ENCODE measurements at regions of chr15 and their contacts with region 1.

Region 1: DNA sequence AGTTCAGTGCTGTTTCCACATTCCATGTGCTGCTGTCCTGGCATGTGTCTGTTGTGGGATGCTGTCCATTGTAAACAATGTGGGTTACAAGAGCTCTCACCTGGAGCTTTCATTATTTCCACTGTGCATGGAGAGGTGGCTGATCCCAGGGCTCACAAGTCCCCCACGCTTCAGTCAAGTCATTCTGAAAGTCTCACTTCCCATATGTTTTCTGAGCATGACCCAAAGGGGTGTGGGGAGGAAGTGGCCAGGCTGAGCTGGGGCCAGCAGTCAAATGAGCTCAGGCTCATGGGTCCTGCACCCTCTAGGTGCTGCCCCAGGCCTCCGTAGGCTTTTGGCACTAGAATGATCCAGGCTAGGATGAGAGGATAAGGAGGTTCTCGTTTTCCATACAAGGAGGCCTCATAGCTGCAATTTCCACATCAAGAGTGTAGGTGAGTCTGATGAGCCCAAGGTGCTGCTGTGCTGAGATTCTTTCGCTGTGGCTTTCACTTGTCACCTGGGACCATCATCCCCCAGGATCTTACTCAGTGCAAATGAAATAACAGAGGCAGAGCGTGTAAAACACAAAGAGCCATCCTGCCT is 22.0 kb downstream of the STARD5 start:
- DNase-seq: peak in 1 of 9 experiments; percentile 51
- ATAC-seq: no peak
- H3K4me3 ChIP-seq: peak overlapping the region; percentile 61 to 89
- H3K4me3 Mint-ChIP-seq: peak overlapping the region; percentile 92
- H3K27ac ChIP-seq: peak overlapping the region; percentile 28 to 92
- H3K27ac Mint-ChIP-seq: peak overlapping the region; percentile 98
- H3K4me1 ChIP-seq: peaks cover 58% of the 10 kb centered on the region
- H3K4me1 Mint-ChIP-seq: peaks cover 72% of the 10 kb centered on the region
- H3K27me3 ChIP-seq: no peaks in the 10 kb centered on the region
- H3K27me3 Mint-ChIP-seq: no peaks in the 10 kb centered on the region
- CTCF ChIP-seq: no peak

Region 2: DNA sequence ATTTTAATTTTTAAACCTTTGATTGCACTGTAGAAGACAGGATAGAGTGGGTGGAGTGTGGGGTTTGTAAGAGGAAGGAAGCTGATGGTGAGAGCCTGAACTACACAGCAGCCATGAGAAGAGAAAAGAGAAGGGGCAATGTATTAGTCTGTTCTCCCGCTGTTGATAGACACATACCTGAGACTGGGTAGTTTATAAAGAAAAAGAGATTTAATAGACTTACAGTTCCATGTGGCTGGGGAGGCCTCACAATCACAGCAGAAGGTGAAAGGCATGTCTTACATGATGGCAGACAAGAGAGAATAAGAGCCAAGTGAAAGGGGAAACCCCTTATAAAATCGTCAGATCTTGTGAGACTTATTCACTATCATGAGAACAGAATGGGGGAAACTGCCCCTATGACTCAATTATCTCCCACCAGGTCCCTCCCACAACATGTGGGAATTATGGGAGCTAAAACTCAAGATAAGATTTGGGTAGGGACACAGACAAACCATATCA is 15.2 kb before region 1 on chr15:
- CTCF ChIA-PET with region 1: interaction called, 498 read pairs
- POLR2A ChIA-PET with region 1: interaction called, 330 read pairs
- intact Hi-C with region 1: loop called in 1 of 2 experiments (anchors 2 kb)
- DNase-seq: peak in 3 of 9 experiments; percentile 35 to 75 (median 53)
- ATAC-seq: peak; percentile 93
- H3K4me3 ChIP-seq: peak overlapping the region in 1 of 2 experiments; percentile 36
- H3K4me3 Mint-ChIP-seq: peak overlapping the region; percentile 75
- H3K27ac ChIP-seq: peak overlapping the region; percentile 48 to 88
- H3K27ac Mint-ChIP-seq: peak overlapping the region; percentile 98
- H3K4me1 ChIP-seq: peaks cover 83% of the 10 kb centered on the region
- H3K4me1 Mint-ChIP-seq: peaks cover 81% of the 10 kb centered on the region
- H3K27me3 ChIP-seq: no peaks in the 10 kb centered on the region
- H3K27me3 Mint-ChIP-seq: no peaks in the 10 kb centered on the region
- CTCF ChIP-seq: no peak

Region 3: GRCh38 chr15:82530606-82531379 is 1228.9 kb after region 1 on chr15:
- CTCF ChIA-PET with region 1: no interaction called
- POLR2A ChIA-PET with region 1: no interaction called
- intact Hi-C with region 1: loop called in 1 of 2 experiments (anchors 10 kb)
- DNase-seq: peak; percentile 49 to 85 (median 73)
- ATAC-seq: peak; percentile 94
- H3K4me3 ChIP-seq: peak overlapping the region; percentile 15 to 17
- H3K4me3 Mint-ChIP-seq: peak overlapping the region; percentile 76
- H3K27ac ChIP-seq: no peak overlapping the region
- H3K27ac Mint-ChIP-seq: peak overlapping the region; percentile 78
- H3K4me1 ChIP-seq: no peaks in the 10 kb centered on the region
- H3K4me1 Mint-ChIP-seq: peaks cover 5% of the 10 kb centered on the region
- H3K27me3 ChIP-seq: no peaks in the 10 kb centered on the region
- H3K27me3 Mint-ChIP-seq: no peaks in the 10 kb centered on the region
- CTCF ChIP-seq: peak; percentile 87

Region 4: GRCh38 chr15:82648257-82649103 is 1346.6 kb after region 1 on chr15:
- CTCF ChIA-PET with region 1: no interaction called
- POLR2A ChIA-PET with region 1: no interaction called
- intact Hi-C with region 1: no loop called
- DNase-seq: no peak
- ATAC-seq: no peak
- H3K4me3 ChIP-seq: peak overlapping the region; percentile 32 to 60
- H3K4me3 Mint-ChIP-seq: peak overlapping the region; percentile 70
- H3K27ac ChIP-seq: no peak overlapping the region
- H3K27ac Mint-ChIP-seq: no peak overlapping the region
- H3K4me1 ChIP-seq: peaks cover 20% of the 10 kb centered on the region
- H3K4me1 Mint-ChIP-seq: peaks cover 12% of the 10 kb centered on the region
- H3K27me3 ChIP-seq: peaks cover 0 to 11% of the 10 kb centered on the region in 2 experiments
- H3K27me3 Mint-ChIP-seq: peaks cover 19% of the 10 kb centered on the region
- CTCF ChIP-seq: no peak

Measured in CD8-positive, alpha-beta T cell (primary cell).